B cell (primary cell): ENCODE measurements at regions of chr17 and their contacts with region 1.

Region 1: DNA sequence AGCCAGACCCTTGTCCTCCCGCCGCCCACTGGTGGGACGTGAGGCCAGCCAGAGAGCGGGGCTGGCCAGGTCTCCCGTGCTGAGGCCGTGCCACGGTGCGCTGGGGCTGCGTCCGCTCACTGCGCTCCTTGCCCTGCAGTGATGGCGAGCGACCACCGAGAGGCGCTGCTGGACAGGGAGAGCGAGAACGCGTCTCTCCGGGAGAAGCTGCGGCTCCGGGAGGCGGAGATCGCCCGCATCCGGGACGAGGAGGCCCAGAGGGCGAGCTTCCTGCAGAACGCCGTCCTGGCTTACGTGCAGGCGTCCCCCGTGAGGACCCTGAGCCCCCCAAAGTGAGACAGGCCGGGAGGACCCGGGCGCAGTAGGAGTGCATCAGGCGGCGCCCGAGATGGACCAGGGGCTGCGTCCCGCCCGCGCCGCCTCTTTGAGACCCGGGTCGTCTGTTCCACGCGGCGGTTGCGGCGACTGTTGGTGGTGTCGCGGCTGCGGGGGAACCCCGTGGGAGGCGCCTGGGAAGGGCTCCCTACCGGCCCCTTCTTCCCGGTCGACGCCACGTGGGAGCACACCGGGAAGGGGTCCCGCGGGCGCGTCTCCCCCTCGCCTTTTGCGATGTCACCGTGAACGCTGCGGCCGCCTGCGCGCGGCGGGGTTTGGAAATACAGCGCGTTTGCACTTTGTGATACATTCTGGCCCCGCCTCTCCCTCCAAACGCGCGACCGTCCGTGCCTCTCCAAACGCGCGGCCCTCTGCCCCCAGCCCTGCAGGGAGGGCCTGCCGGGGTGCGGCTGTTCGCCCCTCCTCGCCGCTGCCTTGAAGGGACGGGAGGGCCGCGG is 792 bp upstream of the RAC3 start:
- DNase-seq: peak; percentile 86
- ATAC-seq: peak; percentile 89
- H3K4me3 ChIP-seq: peak overlapping the region in 4 of 5 experiments; percentile 45 to 59 (median 54)
- H3K4me3 Mint-ChIP-seq: peak overlapping the region; percentile 89
- H3K27ac ChIP-seq: no peak overlapping the region
- H3K27ac Mint-ChIP-seq: peak overlapping the region; percentile 41
- H3K4me1 ChIP-seq: peaks cover 17 to 21% of the 10 kb centered on the region in 2 donors
- H3K4me1 Mint-ChIP-seq: peaks cover 17% of the 10 kb centered on the region
- H3K27me3 ChIP-seq: peaks cover 0 to 39% (median 3%) of the 10 kb centered on the region in 4 experiments
- H3K27me3 Mint-ChIP-seq: no peaks in the 10 kb centered on the region
- CTCF ChIP-seq: peak; percentile 94

Region 2: DNA sequence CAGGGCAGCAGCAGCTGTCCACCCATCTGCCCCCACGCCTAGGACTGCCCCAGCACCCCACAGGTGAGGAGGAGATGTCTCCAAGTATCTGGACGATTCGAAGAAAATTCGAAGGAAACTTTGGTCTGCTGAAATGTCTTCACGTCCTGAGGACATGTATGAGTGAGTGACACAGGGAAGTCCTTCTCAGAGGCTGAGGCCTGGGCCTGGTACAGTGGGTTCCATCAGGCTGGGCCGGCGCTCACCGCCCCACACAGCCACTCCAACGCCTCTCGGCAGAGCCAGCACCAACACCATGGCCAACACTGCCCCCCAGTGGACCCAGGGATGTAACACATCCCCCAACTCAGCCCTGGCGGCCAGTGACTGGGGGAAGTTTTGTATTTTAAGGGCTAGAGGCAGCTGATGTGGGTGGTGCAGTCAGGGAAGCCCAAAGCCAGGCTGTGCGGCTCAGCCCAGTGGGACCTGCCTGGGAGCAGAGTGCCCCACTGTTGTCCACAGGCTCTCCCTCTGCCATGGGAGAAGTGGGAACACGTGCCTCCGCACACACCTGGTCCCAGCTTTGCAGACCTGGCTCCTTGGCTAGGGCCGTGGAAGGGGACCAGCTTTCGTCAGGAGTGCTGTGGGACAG is 123.2 kb after region 1 on chr17:
- CTCF ChIA-PET with region 1: interaction called, 41 read pairs
- POLR2A ChIA-PET with region 1: no interaction called
- intact Hi-C with region 1: no loop called
- DNase-seq: peak; percentile 84
- ATAC-seq: peak; percentile 99
- H3K4me3 ChIP-seq: no peak overlapping the region
- H3K4me3 Mint-ChIP-seq: no peak overlapping the region
- H3K27ac ChIP-seq: no peak overlapping the region
- H3K27ac Mint-ChIP-seq: no peak overlapping the region
- H3K4me1 ChIP-seq: peaks cover 0 to 2% of the 10 kb centered on the region in 2 donors
- H3K4me1 Mint-ChIP-seq: no peaks in the 10 kb centered on the region
- H3K27me3 ChIP-seq: no peaks in the 10 kb centered on the region
- H3K27me3 Mint-ChIP-seq: no peaks in the 10 kb centered on the region
- CTCF ChIP-seq: peak; percentile 94